Activated T-helper 2 cell treated with anti-CD3 and anti-CD28 coated beads, Interferon-gamma antibody, Interleukin-2, Interleukin-4, amounts not matched to agents 10 μg/mL and 5 μg/mL and 100 μg/mL, durations not matched to agents 14 hours and 24 hours and 36 hours (primary cell): ENCODE measurements at regions of chr19 and their contacts with region 1.

Region 1: GRCh38 chr19:14136509-14137281 is at the start of gene ASF1B:
- DNase-seq: peak; percentile 99
- H3K4me3 Mint-ChIP-seq: peak within 1 kb of the TSS; percentile 99
- H3K27ac Mint-ChIP-seq: peak within 1 kb of the TSS; percentile 98
- H3K4me1 Mint-ChIP-seq: peaks cover 30% of the 10 kb centered on the region
- H3K27me3 Mint-ChIP-seq: no peaks in the 10 kb centered on the region
- total RNA-seq, gene ASF1B: 83.4 and 88.9 TPM in 2 replicates

Region 2: DNA sequence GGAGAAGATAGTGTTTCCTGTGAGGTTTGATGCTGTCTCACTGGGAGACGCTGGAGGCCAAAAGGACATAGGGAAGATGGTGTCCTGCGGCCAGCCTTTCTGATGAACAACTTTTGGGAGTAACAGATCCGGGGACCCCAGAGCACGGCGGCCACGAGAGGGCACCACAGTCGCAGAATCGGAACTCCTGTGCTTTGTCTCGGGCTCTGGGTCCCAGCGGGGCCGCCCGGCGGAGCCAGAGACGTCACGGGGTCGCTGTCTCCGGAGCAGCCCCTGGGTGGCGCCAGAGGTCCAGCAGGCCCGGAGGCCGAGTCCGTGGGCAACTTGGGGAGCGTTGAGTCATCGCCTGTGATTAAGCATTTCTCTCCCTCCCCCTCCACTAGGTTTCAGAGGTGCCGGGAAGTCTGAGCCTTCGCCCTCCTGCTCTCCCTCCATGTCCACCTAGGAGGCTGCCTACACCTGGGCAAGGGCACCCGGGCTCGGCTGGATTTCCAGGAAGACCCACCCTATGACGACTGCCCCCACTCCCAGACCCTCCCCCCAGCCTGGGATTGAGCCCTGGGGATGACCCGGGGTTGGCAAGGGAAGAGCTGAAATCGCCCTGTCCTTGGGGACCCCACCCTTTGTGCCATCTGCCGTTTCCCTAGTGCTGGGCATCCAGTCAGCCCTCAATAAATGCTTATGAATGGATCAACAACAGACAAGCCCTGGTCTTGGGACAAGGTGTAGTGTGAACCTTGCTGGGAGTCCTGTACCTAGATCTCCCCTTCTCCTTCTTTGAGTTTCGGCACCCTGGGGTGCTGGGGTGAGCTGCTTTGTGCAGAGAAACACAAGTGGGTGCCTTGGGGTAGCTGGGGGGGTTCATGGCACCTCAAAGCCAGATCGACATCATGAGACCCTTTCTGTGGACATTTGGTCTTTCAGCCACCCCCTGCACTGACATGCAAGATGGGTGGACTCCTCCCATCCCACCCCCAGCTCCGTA is 256.3 kb before region 1 on chr19:
- intact Hi-C with region 1: loop called (anchors 1 kb)
- DNase-seq: peak; percentile 96
- H3K4me3 Mint-ChIP-seq: peak overlapping the region; percentile 51
- H3K27ac Mint-ChIP-seq: peak overlapping the region; percentile 87
- H3K4me1 Mint-ChIP-seq: peaks cover 24% of the 10 kb centered on the region
- H3K27me3 Mint-ChIP-seq: peaks cover 4% of the 10 kb centered on the region

Region 3: GRCh38 chr19:14059093-14059480 is 77.6 kb before region 1 on chr19:
- intact Hi-C with region 1: no loop called
- DNase-seq: no peak
- H3K4me3 Mint-ChIP-seq: peak overlapping the region; percentile 34
- H3K27ac Mint-ChIP-seq: no peak overlapping the region
- H3K4me1 Mint-ChIP-seq: peaks cover 16% of the 10 kb centered on the region
- H3K27me3 Mint-ChIP-seq: peaks cover 36% of the 10 kb centered on the region

Region 4: GRCh38 chr19:14081325-14082093 is 55.2 kb before region 1 on chr19:
- intact Hi-C with region 1: loop called (anchors 2 kb)
- DNase-seq: peak; percentile 99
- H3K4me3 Mint-ChIP-seq: peak overlapping the region; percentile 93
- H3K27ac Mint-ChIP-seq: peak overlapping the region; percentile 93
- H3K4me1 Mint-ChIP-seq: peaks cover 7% of the 10 kb centered on the region
- H3K27me3 Mint-ChIP-seq: no peaks in the 10 kb centered on the region

Region 5: GRCh38 chr19:14117668-14118164 is 19.0 kb before region 1 on chr19 and contains the start of gene PRKACA:
- intact Hi-C with region 1: loop called (anchors 1 kb)
- DNase-seq: peak; percentile 99
- H3K4me3 Mint-ChIP-seq: peak within 1 kb of the TSS; percentile 96
- H3K27ac Mint-ChIP-seq: peak within 1 kb of the TSS; percentile 95
- H3K4me1 Mint-ChIP-seq: peaks cover 28% of the 10 kb centered on the region
- H3K27me3 Mint-ChIP-seq: no peaks in the 10 kb centered on the region
- total RNA-seq, gene PRKACA: 75.4 and 76.8 TPM in 2 replicates

Region 6: DNA sequence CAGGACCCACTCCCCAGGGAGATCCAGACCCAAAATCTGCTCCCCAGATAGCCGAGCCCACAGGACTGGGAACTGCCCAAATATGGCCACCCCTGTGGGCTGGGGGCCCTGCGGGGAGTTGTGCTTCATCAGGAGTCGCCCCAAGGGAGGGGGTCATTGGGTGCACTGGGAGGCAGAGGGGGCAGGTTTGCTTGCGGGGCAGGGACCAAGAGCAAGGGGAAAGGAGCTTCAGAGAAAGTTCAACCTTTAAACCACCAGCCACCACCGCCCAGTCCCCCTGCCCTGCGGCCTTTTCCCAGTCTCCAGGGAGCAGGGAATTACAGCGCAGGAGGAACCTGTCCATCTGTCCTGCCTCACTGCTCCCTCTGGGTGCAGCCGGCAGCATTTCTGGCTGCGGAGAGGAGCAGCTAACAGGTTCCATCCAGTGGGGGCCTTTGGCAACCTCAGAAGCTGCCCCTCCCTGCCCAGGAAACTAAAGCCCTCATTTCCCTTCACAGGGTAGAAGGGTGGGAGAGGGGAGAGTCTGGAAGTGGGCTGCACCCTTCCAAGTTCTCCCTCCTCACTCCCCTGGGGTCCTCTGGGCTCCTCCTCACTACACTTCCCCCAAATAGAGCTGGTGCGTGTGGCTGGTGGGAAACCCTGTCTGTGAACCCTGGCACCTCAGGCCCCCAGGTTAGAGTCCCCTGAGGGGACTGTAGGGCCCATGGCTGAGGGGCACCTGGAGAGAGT is 13.5 kb after region 1 on chr19:
- intact Hi-C with region 1: no loop called
- DNase-seq: no peak
- H3K4me3 Mint-ChIP-seq: peak overlapping the region; percentile 75
- H3K27ac Mint-ChIP-seq: peak overlapping the region; percentile 87
- H3K4me1 Mint-ChIP-seq: peaks cover 28% of the 10 kb centered on the region
- H3K27me3 Mint-ChIP-seq: no peaks in the 10 kb centered on the region

Region 7: GRCh38 chr19:14347999-14348889 is 211.5 kb after region 1 on chr19:
- intact Hi-C with region 1: loop called (anchors 5 kb)
- DNase-seq: peak; percentile 54
- H3K4me3 Mint-ChIP-seq: peak overlapping the region; percentile 42
- H3K27ac Mint-ChIP-seq: peak overlapping the region; percentile 32
- H3K4me1 Mint-ChIP-seq: peaks cover 14% of the 10 kb centered on the region
- H3K27me3 Mint-ChIP-seq: no peaks in the 10 kb centered on the region

Region 8: GRCh38 chr19:14383661-14384555 is 247.2 kb after region 1 on chr19:
- intact Hi-C with region 1: loop called (anchors 2 kb)
- DNase-seq: peak; percentile 50
- H3K4me3 Mint-ChIP-seq: peak overlapping the region; percentile 97
- H3K27ac Mint-ChIP-seq: peak overlapping the region; percentile 98
- H3K4me1 Mint-ChIP-seq: peaks cover 29% of the 10 kb centered on the region
- H3K27me3 Mint-ChIP-seq: no peaks in the 10 kb centered on the region

Region 9: GRCh38 chr19:14472202-14472938 is 335.7 kb after region 1 on chr19:
- intact Hi-C with region 1: loop called (anchors 2 kb)
- DNase-seq: peak; percentile 75
- H3K4me3 Mint-ChIP-seq: no peak overlapping the region
- H3K27ac Mint-ChIP-seq: no peak overlapping the region
- H3K4me1 Mint-ChIP-seq: peaks cover 16% of the 10 kb centered on the region
- H3K27me3 Mint-ChIP-seq: peaks cover 15% of the 10 kb centered on the region